Right ventricle myocardium superior (tissue), 1 donor: ENCODE measurements at regions of chr6 and their contacts with region 1.

Region 1: GRCh38 chr6:89080542-89081422 is at the start of gene PNRC1:
- DNase-seq: peak; percentile 100
- ATAC-seq: peak; percentile 92
- total RNA-seq, gene PNRC1: 121 TPM

Region 2: DNA sequence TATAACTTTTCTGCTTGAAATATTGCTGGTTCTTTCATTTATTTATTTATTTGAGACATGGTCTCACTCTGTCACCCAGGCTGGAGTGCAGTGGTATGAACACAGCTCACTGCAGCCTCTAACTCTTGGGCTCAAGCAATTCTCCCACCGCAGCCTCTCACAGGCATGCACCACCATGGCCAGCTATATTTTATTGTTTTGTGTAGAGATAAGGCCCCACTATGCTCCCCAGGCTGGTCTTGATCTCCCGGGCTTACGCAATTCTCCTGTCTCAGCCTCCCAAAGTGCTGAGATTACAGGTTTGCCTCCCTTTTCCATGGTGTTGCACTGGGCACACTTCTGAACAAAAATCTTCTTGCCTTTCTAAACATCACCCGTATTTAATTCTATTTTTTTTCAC is 78.3 kb before region 1 on chr6:
- intact Hi-C with region 1: no loop called
- DNase-seq: no peak
- ATAC-seq: no peak

Region 3: GRCh38 chr6:89035252-89036106 is 45.3 kb before region 1 on chr6:
- intact Hi-C with region 1: loop called (anchors 5 kb)
- DNase-seq: peak; percentile 85
- ATAC-seq: peak; percentile 95

Region 4: GRCh38 chr6:89145787-89146646 is 65.2 kb after region 1 on chr6 and contains the start of gene PM20D2:
- intact Hi-C with region 1: loop called (anchors 5 kb)
- DNase-seq: peak; percentile 74
- ATAC-seq: peak; percentile 97
- total RNA-seq, gene PM20D2: 11.1 TPM